Calu3 (cell line): ENCODE measurements at regions of chr1 and their contacts with region 1.

Region 1: DNA sequence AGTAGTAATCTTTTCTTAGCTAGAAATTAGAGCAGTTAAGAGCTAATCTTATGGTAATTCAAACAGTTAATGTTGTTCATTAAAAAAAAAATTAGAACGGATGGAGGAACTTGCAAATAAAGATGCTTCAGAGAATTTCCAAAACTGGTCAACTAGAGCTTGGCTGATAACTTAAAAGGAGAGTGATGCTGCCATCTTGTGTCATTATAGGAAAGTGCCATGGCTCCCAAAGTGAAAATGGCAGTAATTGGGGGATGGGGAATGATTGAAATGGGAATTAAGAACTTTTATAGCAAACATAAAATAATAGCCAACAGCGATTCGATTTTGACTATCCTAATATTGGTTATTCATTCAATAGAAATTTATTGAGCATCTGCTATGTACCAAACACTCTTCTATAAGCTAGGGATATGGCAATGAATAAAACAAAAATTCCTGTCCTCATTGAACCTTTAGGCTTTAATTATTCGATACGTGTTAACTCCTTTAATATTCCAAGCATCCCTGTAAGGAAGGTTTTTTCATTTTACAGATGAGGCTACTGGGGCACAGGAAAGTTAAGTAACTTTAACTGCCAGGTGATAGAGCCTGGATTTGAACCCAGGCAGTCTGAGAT is 5.7 kb upstream of the PLPP3 start:
- DNase-seq: peak; percentile 39
- H3K4me3 Mint-ChIP-seq: no peak overlapping the region
- H3K27ac Mint-ChIP-seq: no peak overlapping the region
- H3K4me1 Mint-ChIP-seq: peaks cover 6% of the 10 kb centered on the region
- H3K27me3 Mint-ChIP-seq: no peaks in the 10 kb centered on the region
- CTCF ChIP-seq: peak; percentile 61

Region 2: GRCh38 chr1:55140546-55140983 is 1444.5 kb before region 1 on chr1:
- CTCF ChIA-PET with region 1: interaction called, 4 read pairs
- intact Hi-C with region 1: loop called (anchors 10 kb)
- DNase-seq: peak; percentile 75
- H3K4me3 Mint-ChIP-seq: no peak overlapping the region
- H3K27ac Mint-ChIP-seq: no peak overlapping the region
- H3K4me1 Mint-ChIP-seq: no peaks in the 10 kb centered on the region
- H3K27me3 Mint-ChIP-seq: no peaks in the 10 kb centered on the region
- CTCF ChIP-seq: peak; percentile 55

Region 3: GRCh38 chr1:55375617-55376258 is 1209.3 kb before region 1 on chr1:
- CTCF ChIA-PET with region 1: no interaction called
- intact Hi-C with region 1: loop called (anchors 2 kb)
- DNase-seq: peak; percentile 61
- H3K4me3 Mint-ChIP-seq: no peak overlapping the region
- H3K27ac Mint-ChIP-seq: no peak overlapping the region
- H3K4me1 Mint-ChIP-seq: no peaks in the 10 kb centered on the region
- H3K27me3 Mint-ChIP-seq: peaks cover 3% of the 10 kb centered on the region
- CTCF ChIP-seq: peak; percentile 95

Region 4: DNA sequence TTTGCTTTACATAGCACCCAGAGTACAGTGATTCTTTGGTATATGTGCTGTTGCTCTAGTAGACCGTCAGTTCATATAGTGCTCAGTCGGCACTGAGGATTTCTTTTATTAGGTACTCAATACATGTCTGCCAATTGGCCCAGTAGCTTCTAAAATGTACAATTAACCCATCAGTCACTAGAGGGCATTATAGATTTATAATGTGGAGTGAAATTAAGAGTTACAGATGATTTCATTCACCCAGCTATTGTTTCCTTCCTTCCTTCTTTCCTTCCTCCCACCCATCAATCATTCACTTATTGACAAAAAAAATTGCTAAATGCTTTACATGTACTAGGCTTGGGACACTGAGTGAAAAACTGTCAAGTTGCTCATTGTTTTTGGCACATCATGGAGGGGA is 1106.3 kb before region 1 on chr1:
- CTCF ChIA-PET with region 1: interaction called, 4 read pairs
- intact Hi-C with region 1: loop called (anchors 2 kb)
- DNase-seq: no peak
- H3K4me3 Mint-ChIP-seq: no peak overlapping the region
- H3K27ac Mint-ChIP-seq: no peak overlapping the region
- H3K4me1 Mint-ChIP-seq: peaks cover 43% of the 10 kb centered on the region
- H3K27me3 Mint-ChIP-seq: no peaks in the 10 kb centered on the region
- CTCF ChIP-seq: no peak

Region 5: GRCh38 chr1:55893155-55893554 is 691.9 kb before region 1 on chr1:
- CTCF ChIA-PET with region 1: no interaction called
- intact Hi-C with region 1: loop called (anchors 10 kb)
- DNase-seq: peak; percentile 15
- H3K4me3 Mint-ChIP-seq: no peak overlapping the region
- H3K27ac Mint-ChIP-seq: no peak overlapping the region
- H3K4me1 Mint-ChIP-seq: no peaks in the 10 kb centered on the region
- H3K27me3 Mint-ChIP-seq: no peaks in the 10 kb centered on the region
- CTCF ChIP-seq: no peak

Region 6: DNA sequence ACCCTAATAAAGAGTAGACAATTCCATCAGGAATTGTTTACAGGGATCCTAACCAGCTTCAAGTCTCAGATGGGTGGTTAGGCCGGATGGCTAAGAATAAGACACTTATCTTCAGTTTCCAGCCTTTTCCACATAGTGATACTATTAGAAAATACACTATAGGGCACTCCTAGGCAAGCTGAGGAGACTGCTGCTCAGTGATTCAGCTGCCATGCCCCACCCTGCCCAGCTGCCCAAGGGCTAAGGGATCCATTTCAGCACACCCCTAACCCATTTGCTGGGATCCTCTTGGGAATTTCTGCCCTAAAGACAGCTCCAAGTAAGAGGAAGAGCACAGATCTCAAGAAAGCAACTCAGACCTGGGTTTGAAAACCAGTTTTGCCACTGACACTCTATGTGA is 37.5 kb before region 1 on chr1:
- CTCF ChIA-PET with region 1: no interaction called
- intact Hi-C with region 1: no loop called
- DNase-seq: no peak
- H3K4me3 Mint-ChIP-seq: no peak overlapping the region
- H3K27ac Mint-ChIP-seq: no peak overlapping the region
- H3K4me1 Mint-ChIP-seq: peaks cover 20% of the 10 kb centered on the region
- H3K27me3 Mint-ChIP-seq: no peaks in the 10 kb centered on the region
- CTCF ChIP-seq: no peak

Region 7: DNA sequence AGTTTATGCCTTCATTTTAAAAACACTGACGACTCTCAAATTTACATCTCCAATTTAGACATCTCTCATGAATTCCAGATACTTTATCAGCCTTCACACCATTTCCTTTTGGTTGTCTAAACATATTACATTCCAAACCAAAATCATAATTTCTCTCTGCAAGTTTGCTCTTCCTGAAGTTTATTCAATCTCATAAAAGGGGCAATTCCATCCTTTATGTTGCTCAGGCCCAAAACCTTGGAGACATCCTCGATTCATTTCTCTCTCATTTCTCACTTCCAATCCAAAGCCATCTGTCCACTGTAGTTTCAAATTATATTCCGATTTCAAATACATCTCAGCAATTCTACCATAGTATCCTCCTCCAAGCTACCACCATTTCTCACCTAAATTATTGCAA is 160.2 kb after region 1 on chr1:
- CTCF ChIA-PET with region 1: no interaction called
- intact Hi-C with region 1: no loop called
- DNase-seq: no peak
- H3K4me3 Mint-ChIP-seq: no peak overlapping the region
- H3K27ac Mint-ChIP-seq: no peak overlapping the region
- H3K4me1 Mint-ChIP-seq: no peaks in the 10 kb centered on the region
- H3K27me3 Mint-ChIP-seq: no peaks in the 10 kb centered on the region
- CTCF ChIP-seq: no peak

Region 8: GRCh38 chr1:56803561-56804156 is 218.6 kb after region 1 on chr1:
- CTCF ChIA-PET with region 1: no interaction called
- intact Hi-C with region 1: loop called (anchors 10 kb)
- DNase-seq: peak; percentile 74
- H3K4me3 Mint-ChIP-seq: no peak overlapping the region
- H3K27ac Mint-ChIP-seq: no peak overlapping the region
- H3K4me1 Mint-ChIP-seq: no peaks in the 10 kb centered on the region
- H3K27me3 Mint-ChIP-seq: peaks cover under 1% of the 10 kb centered on the region
- CTCF ChIP-seq: peak; percentile 62